Psoas muscle (tissue), 8 donors: ENCODE measurements at regions of chr6 and their contacts with region 1.

Region 1: GRCh38 chr6:17289630-17290061 is 8.5 kb downstream of the RBM24 start:
- DNase-seq: peak; percentile 81 to 92
- ATAC-seq: peak; percentile 83 to 89 (median 87)
- H3K4me3 ChIP-seq: peak overlapping the region; percentile 93
- H3K27ac ChIP-seq: peak overlapping the region; percentile 98
- H3K4me1 ChIP-seq: peaks cover 26% of the 10 kb centered on the region
- H3K27me3 ChIP-seq: no peaks in the 10 kb centered on the region
- CTCF ChIP-seq: no peak

Region 2: GRCh38 chr6:17417817-17418216 is 128.2 kb after region 1 on chr6:
- intact Hi-C with region 1: loop called in 1 of 2 experiments (anchors 5 kb)
- DNase-seq: no peak
- ATAC-seq: peak; percentile 35 to 45 (median 36)
- H3K4me3 ChIP-seq: peak overlapping the region; percentile 46
- H3K27ac ChIP-seq: peak overlapping the region; percentile 96
- H3K4me1 ChIP-seq: peaks cover 77% of the 10 kb centered on the region
- H3K27me3 ChIP-seq: no peaks in the 10 kb centered on the region
- CTCF ChIP-seq: no peak